AG04449 (cell line): ENCODE measurements at regions of chr1 and their contacts with region 1.

Region 1: GRCh38 chr1:54273092-54273794 is 73.3 kb downstream of the MRPL37 start:
- DNase-seq: no peak
- H3K4me3 ChIP-seq: no peak overlapping the region; the same call in 1 of the 2 replicates
- CTCF ChIP-seq: peak; percentile 83

Region 2: GRCh38 chr1:54239631-54240031 is 33.6 kb before region 1 on chr1:
- CTCF ChIA-PET with region 1: no interaction called
- POLR2A ChIA-PET with region 1: no interaction called
- DNase-seq: no peak
- H3K4me3 ChIP-seq: no peak overlapping the region
- CTCF ChIP-seq: no peak

Region 3: GRCh38 chr1:54260810-54261209 is 12.4 kb before region 1 on chr1:
- CTCF ChIA-PET with region 1: interaction called, 32 read pairs
- POLR2A ChIA-PET with region 1: no interaction called
- DNase-seq: no peak
- H3K4me3 ChIP-seq: no peak overlapping the region
- CTCF ChIP-seq: no peak

Region 4: GRCh38 chr1:54287176-54287650 is 14.0 kb after region 1 on chr1:
- CTCF ChIA-PET with region 1: interaction called, 22 read pairs
- POLR2A ChIA-PET with region 1: no interaction called
- DNase-seq: peak; percentile 38
- H3K4me3 ChIP-seq: no peak overlapping the region
- CTCF ChIP-seq: no peak

Region 5: GRCh38 chr1:54384911-54385726 is 111.9 kb after region 1 on chr1:
- CTCF ChIA-PET with region 1: interaction called, 15 read pairs
- POLR2A ChIA-PET with region 1: interaction called, 4 read pairs
- DNase-seq: no peak
- H3K4me3 ChIP-seq: no peak overlapping the region
- CTCF ChIP-seq: no peak

Region 6: DNA sequence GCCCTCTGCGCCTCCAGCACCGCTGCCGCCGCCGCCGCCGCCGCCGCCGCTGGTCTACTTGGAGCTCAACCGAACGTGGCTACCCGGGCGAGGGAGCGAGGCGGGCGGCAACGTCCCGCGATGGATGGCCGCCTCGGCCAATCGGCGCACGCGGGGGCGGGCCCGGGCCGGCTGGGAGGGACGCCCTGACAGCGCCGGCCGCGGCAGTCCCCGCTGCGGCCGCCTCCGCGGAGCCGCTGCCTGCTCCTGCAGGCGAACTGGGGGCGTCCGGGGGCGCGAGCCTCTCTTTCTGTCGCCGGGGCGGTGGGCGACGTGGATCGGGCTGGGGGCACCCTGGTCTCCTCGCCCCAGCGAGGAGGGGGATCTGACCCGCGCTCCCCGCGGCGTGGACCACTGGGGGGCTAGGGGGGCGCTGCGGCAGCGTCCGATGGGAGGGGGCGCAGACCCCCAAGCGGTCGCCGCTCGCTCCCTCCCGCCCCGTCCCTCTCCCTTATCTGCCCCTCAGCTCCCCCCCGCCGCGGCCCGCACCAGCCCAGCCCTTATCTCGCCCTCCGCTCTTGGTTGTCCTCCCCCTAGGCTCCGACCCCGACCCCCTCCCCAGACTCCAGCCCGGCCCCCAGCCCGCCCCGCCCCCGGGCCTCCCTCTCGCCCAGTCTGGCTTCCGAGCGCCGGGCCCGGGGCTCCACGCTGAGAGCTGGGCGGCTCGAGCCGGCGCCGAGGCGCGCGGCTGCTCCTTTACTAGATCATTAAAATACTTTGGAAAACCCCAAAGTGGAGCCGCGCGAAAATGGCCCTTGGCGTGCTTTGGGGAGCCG is 133.3 kb after region 1 on chr1 and contains the start of gene SSBP3:
- CTCF ChIA-PET with region 1: interaction called, 13 read pairs
- POLR2A ChIA-PET with region 1: no interaction called
- DNase-seq: no peak
- H3K4me3 ChIP-seq: peak within 1 kb of the TSS; percentile 79
- CTCF ChIP-seq: no peak

Region 7: GRCh38 chr1:54604572-54605370 is 331.5 kb after region 1 on chr1:
- CTCF ChIA-PET with region 1: no interaction called
- POLR2A ChIA-PET with region 1: no interaction called
- DNase-seq: no peak
- H3K4me3 ChIP-seq: no peak overlapping the region
- CTCF ChIP-seq: no peak